CD8-positive, alpha-beta T cell (primary cell): ENCODE measurements at regions of chr1 and their contacts with region 1.

Region 1: GRCh38 chr1:2133039-2133878 is 61.3 kb downstream of the FAAP20 start:
- DNase-seq: peak; percentile 90 to 99 (median 97)
- ATAC-seq: peak; percentile 89
- H3K4me3 ChIP-seq: peak overlapping the region; percentile 51 to 61
- H3K4me3 Mint-ChIP-seq: peak overlapping the region; percentile 81
- H3K27ac ChIP-seq: peak overlapping the region; percentile 73 to 91
- H3K27ac Mint-ChIP-seq: peak overlapping the region; percentile 90
- H3K4me1 ChIP-seq: peaks cover 11% of the 10 kb centered on the region
- H3K4me1 Mint-ChIP-seq: peaks cover 31% of the 10 kb centered on the region
- H3K27me3 ChIP-seq: no peaks in the 10 kb centered on the region
- H3K27me3 Mint-ChIP-seq: no peaks in the 10 kb centered on the region
- CTCF ChIP-seq: no peak

Region 2: DNA sequence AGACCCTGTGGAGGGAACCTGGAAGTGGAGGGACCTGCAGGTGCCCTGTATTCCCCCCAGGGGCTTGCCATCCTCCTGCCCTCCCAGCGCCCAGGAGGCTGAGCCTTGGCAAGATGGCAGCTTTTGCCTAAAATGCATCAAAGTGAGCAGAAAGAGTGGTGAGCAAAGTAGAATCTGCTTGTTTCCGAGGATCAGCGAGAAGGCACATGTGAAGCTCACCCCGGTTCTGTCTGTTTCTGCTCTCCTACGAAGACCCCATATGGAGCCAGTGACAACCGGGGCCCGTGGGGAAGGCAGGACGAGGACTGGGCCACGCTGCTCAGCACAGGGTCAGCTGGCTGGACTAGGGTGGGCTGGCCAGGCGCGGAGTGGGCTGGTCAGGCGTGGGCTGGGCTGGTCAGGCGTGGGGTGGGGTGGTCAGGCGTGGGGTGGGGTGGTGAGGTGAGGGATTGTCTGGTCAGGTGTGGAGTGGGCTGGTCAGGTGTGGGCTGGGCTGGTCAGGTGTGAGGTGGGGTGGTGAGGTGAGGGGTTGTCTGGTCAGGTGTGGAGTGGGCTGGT is 528.1 kb before region 1 on chr1:
- CTCF ChIA-PET with region 1: no interaction called
- POLR2A ChIA-PET with region 1: no interaction called
- intact Hi-C with region 1: no loop called
- DNase-seq: peak in 2 of 9 experiments; percentile 18 to 25
- ATAC-seq: no peak
- H3K4me3 ChIP-seq: no peak overlapping the region
- H3K4me3 Mint-ChIP-seq: no peak overlapping the region
- H3K27ac ChIP-seq: no peak overlapping the region
- H3K27ac Mint-ChIP-seq: peak overlapping the region; percentile 49
- H3K4me1 ChIP-seq: peaks cover 18% of the 10 kb centered on the region
- H3K4me1 Mint-ChIP-seq: peaks cover 14% of the 10 kb centered on the region
- H3K27me3 ChIP-seq: no peaks in the 10 kb centered on the region
- H3K27me3 Mint-ChIP-seq: no peaks in the 10 kb centered on the region
- CTCF ChIP-seq: no peak

Region 3: GRCh38 chr1:1906185-1907097 is 226.8 kb before region 1 on chr1:
- CTCF ChIA-PET with region 1: no interaction called
- POLR2A ChIA-PET with region 1: no interaction called
- intact Hi-C with region 1: loop called in 1 of 2 experiments (anchors 1 kb)
- DNase-seq: peak; percentile 39 to 80 (median 68)
- ATAC-seq: peak; percentile 21
- H3K4me3 ChIP-seq: no peak overlapping the region
- H3K4me3 Mint-ChIP-seq: peak overlapping the region; percentile 54
- H3K27ac ChIP-seq: no peak overlapping the region
- H3K27ac Mint-ChIP-seq: no peak overlapping the region
- H3K4me1 ChIP-seq: peaks cover 10% of the 10 kb centered on the region
- H3K4me1 Mint-ChIP-seq: peaks cover 11% of the 10 kb centered on the region
- H3K27me3 ChIP-seq: peaks cover 0 to 3% of the 10 kb centered on the region in 2 experiments
- H3K27me3 Mint-ChIP-seq: no peaks in the 10 kb centered on the region
- CTCF ChIP-seq: peak; percentile 86

Region 4: DNA sequence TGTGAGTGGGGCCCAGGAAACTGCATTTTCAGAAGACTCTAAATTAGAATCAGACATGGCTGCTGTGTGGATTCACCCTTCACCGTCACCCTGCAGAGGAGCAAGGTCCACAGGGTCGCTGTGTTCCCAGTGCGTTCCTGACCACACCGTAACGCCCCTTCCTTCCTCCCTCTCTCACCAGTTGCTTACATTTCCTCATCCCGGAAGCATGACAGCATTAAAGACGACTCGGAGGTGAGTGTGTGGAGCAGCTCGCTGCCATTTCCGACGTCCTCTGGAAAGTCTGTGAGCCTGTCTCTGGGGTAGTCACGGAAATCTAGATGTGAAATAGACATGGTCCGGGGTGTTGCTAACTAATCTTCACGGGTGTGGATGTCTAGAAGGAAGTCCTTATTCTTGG is 15.4 kb after region 1 on chr1:
- CTCF ChIA-PET with region 1: interaction called, 34 read pairs
- POLR2A ChIA-PET with region 1: interaction called, 6 read pairs
- intact Hi-C with region 1: loop called (anchors 1 to 2 kb)
- DNase-seq: peak; percentile 28 to 89 (median 68)
- ATAC-seq: peak; percentile 61
- H3K4me3 ChIP-seq: peak overlapping the region; percentile 2 to 18
- H3K4me3 Mint-ChIP-seq: no peak overlapping the region
- H3K27ac ChIP-seq: peak overlapping the region; percentile 56 to 64
- H3K27ac Mint-ChIP-seq: no peak overlapping the region
- H3K4me1 ChIP-seq: peaks cover 80% of the 10 kb centered on the region
- H3K4me1 Mint-ChIP-seq: peaks cover 37% of the 10 kb centered on the region
- H3K27me3 ChIP-seq: no peaks in the 10 kb centered on the region
- H3K27me3 Mint-ChIP-seq: no peaks in the 10 kb centered on the region
- CTCF ChIP-seq: no peak

Region 5: DNA sequence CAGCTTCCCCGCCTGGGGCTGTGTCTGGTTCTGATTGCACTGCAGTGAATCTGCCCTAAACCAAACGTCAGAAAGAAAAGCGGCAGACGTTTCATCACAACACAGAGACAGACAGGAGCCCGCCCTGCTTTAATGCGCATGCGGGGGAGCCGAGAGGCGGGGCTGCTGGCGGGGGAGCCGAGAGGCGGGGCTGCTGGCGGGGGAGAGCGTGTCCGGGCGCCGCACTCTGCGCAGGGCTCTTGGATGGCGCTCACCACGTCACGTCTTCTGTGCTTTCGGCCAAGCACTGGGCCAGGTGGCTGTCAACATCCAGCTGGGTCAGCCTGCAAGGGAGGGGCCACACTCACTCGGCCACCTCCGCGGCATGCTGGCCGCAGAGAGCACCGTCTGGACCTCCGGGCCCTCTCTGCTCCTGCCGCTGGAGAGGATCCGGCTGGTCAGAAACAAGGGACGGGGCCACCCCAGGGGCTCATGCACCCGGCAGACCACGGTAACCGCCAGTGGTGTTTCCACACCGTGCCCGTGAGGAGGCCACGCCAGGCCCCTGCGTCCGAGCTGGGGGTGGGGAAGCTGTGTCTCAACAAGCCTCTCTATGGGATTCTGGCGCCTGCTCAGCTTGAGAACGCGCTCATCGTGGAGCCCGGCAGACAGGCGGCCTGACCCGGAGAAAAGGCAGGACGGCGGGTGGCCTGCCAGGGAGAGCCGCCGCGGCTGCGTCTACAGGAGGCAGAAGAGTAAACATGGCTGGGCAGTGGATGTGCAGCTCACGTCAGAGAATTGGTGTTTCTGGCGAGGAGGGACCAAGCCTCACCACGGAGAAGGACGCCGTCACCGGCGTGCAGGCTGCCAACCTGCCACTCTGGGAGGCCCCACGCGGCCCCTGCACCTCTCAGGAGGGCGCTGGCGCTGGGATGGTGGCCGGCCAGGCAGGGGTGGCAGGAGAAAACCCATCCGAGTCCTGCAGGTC is 56.5 kb after region 1 on chr1:
- CTCF ChIA-PET with region 1: interaction called, 5 read pairs
- POLR2A ChIA-PET with region 1: no interaction called
- intact Hi-C with region 1: loop called (anchors 1 kb)
- DNase-seq: peak; percentile 83 to 94 (median 90)
- ATAC-seq: peak; percentile 93
- H3K4me3 ChIP-seq: peak overlapping the region; percentile 54 to 61
- H3K4me3 Mint-ChIP-seq: peak overlapping the region; percentile 80
- H3K27ac ChIP-seq: peak overlapping the region; percentile 70 to 77
- H3K27ac Mint-ChIP-seq: peak overlapping the region; percentile 98
- H3K4me1 ChIP-seq: peaks cover 16% of the 10 kb centered on the region
- H3K4me1 Mint-ChIP-seq: peaks cover 17% of the 10 kb centered on the region
- H3K27me3 ChIP-seq: no peaks in the 10 kb centered on the region
- H3K27me3 Mint-ChIP-seq: no peaks in the 10 kb centered on the region
- CTCF ChIP-seq: no peak

Region 6: GRCh38 chr1:2227346-2228153 is 94.3 kb after region 1 on chr1:
- CTCF ChIA-PET with region 1: no interaction called
- POLR2A ChIA-PET with region 1: no interaction called
- intact Hi-C with region 1: loop called in 1 of 2 experiments (anchors 1 kb)
- DNase-seq: peak; percentile 88 to 97 (median 91)
- ATAC-seq: peak; percentile 70
- H3K4me3 ChIP-seq: peak overlapping the region in 1 of 2 experiments; percentile 24
- H3K4me3 Mint-ChIP-seq: peak overlapping the region; percentile 68
- H3K27ac ChIP-seq: peak overlapping the region in 1 of 2 experiments; percentile 66
- H3K27ac Mint-ChIP-seq: peak overlapping the region; percentile 74
- H3K4me1 ChIP-seq: peaks cover 24% of the 10 kb centered on the region
- H3K4me1 Mint-ChIP-seq: peaks cover 21% of the 10 kb centered on the region
- H3K27me3 ChIP-seq: no peaks in the 10 kb centered on the region
- H3K27me3 Mint-ChIP-seq: no peaks in the 10 kb centered on the region
- CTCF ChIP-seq: no peak

Region 7: GRCh38 chr1:2412519-2413233 is 279.4 kb after region 1 on chr1 and contains the start of gene PEX10:
- CTCF ChIA-PET with region 1: no interaction called
- POLR2A ChIA-PET with region 1: no interaction called
- intact Hi-C with region 1: loop called in 1 of 2 experiments (anchors 1 kb)
- DNase-seq: peak; percentile 97 to 100 (median 99)
- ATAC-seq: peak; percentile 91
- H3K4me3 ChIP-seq: peak within 1 kb of the TSS; percentile 64 to 89
- H3K4me3 Mint-ChIP-seq: peak within 1 kb of the TSS; percentile 86
- H3K27ac ChIP-seq: peak within 1 kb of the TSS; percentile 81 to 93
- H3K27ac Mint-ChIP-seq: peak within 1 kb of the TSS; percentile 93
- H3K4me1 ChIP-seq: peaks cover 53% of the 10 kb centered on the region
- H3K4me1 Mint-ChIP-seq: peaks cover 40% of the 10 kb centered on the region
- H3K27me3 ChIP-seq: no peaks in the 10 kb centered on the region
- H3K27me3 Mint-ChIP-seq: no peaks in the 10 kb centered on the region
- CTCF ChIP-seq: no peak
- total RNA-seq, gene PEX10: 11.6 to 11.8 TPM

Region 8: DNA sequence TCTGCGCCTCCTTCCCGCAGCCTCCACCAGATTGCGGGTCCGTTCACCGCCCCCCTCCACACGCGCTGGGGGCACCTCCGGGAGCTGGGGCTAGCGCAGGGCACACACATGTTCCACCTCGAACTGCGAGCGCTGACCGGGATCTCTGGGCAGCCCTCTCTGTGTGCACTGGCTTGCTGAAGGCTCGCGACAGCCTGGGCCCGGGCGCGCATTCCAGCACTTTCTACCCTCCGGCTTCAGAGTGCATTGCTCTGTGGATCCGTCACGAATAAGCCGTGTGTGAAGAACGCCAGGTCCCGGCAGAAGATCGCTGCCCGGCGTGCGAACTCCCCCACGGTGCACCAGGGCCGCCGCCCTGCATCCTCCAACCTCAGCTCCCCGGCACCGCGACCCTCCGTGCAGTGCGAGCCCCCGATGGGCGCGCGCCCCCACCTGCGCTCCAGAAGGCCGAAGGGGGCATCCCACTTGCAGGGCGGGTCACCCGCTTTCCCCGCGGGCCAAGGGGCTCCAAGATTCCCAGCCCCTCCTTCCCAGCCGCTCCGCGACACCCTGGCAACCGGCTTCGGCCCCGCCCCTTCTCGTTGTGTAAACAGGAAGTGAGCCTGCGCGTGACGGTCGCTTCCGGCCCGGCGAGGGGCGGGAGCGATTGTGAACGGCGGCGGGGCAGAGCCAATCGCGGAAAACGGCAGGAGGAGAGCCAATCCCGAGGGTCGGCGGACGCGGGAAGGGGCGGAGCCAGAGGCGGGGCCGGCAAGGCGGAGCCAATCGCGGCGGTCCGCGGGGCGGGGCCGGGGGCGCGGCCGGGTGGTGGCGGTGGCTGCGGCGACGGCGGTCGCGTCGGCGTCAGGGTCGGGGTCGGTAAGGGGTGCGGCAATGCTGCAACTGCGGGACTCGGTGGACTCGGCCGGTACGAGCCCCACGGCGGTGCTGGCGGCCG is 1491.2 kb after region 1 on chr1 and contains the start of gene TPRG1L:
- CTCF ChIA-PET with region 1: no interaction called
- POLR2A ChIA-PET with region 1: no interaction called
- intact Hi-C with region 1: loop called in 1 of 2 experiments (anchors 5 kb)
- DNase-seq: peak; percentile 97 to 99 (median 98)
- ATAC-seq: peak; percentile 93
- H3K4me3 ChIP-seq: peak within 1 kb of the TSS; percentile 72 to 100
- H3K4me3 Mint-ChIP-seq: peak within 1 kb of the TSS; percentile 98
- H3K27ac ChIP-seq: peak within 1 kb of the TSS; percentile 61 to 89
- H3K27ac Mint-ChIP-seq: peak within 1 kb of the TSS; percentile 98
- H3K4me1 ChIP-seq: peaks cover 29% of the 10 kb centered on the region
- H3K4me1 Mint-ChIP-seq: peaks cover 40% of the 10 kb centered on the region
- H3K27me3 ChIP-seq: no peaks in the 10 kb centered on the region
- H3K27me3 Mint-ChIP-seq: no peaks in the 10 kb centered on the region
- CTCF ChIP-seq: no peak
- total RNA-seq, gene TPRG1L: 39.0 to 39.8 TPM